ENCODE measurements at regions of chr1 and their contacts with region 1.

Region 1: GRCh38 chr1:39196244-39197215 is 8.0 kb upstream of the MACF1 start:
- DNase-seq: peak; percentile 76
- H3K4me3 ChIP-seq: no peak overlapping the region
- H3K27ac ChIP-seq: peak overlapping the region; percentile 69
- H3K4me1 ChIP-seq: peaks cover 53% of the 10 kb centered on the region
- H3K27me3 ChIP-seq: no peaks in the 10 kb centered on the region
- CTCF ChIP-seq: no peak

Region 2: DNA sequence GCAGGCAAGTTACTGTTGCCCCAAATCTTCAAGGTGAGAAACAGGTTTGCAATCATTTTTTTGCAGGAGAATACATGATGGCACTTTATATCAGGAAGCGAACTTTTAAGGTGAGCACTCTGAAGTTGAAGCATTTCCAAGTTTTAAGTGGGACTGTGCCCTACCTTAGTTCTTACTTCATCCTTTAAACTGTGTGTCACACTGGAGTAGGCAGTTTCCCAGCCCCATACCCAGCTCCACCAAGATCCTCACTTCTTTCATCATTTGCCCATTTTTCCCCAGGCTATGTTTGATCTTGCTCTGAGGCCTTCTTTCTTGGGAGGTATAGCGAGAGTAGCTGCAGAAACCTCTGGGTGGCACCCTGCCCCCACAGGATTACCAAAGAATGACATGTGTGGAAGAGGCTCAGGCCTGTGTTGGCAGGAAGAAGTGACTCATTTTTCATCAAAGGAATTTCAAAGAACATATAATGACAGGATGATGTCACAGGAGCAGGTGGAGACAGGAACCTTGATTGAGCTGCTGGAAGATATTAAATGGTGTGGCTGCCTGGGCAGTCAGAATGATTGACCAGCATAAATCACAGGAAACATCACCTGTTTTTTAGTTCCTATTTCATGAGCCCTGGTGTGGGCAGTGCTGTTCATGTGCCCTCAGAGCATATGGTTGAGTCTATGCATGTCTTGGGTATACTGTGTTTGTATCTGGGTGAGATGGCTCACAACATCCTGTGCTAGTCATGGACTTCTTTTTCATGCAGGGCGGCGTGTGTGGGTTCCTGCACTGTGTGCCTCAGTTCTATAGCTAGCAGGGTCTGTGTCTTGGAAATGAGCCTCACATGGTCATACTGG is 12.8 kb before region 1 on chr1:
- CTCF ChIA-PET with region 1: no interaction called
- dilution Hi-C with region 1: no loop called
- in situ Hi-C with region 1: no loop called
- intact Hi-C with region 1: loop called (anchors 1 kb)
- DNase-seq: peak; percentile 100
- H3K4me3 ChIP-seq: no peak overlapping the region
- H3K27ac ChIP-seq: peak overlapping the region; percentile 93
- H3K4me1 ChIP-seq: peaks cover 59% of the 10 kb centered on the region
- H3K27me3 ChIP-seq: no peaks in the 10 kb centered on the region
- CTCF ChIP-seq: peak; percentile 40 to 52

Region 3: DNA sequence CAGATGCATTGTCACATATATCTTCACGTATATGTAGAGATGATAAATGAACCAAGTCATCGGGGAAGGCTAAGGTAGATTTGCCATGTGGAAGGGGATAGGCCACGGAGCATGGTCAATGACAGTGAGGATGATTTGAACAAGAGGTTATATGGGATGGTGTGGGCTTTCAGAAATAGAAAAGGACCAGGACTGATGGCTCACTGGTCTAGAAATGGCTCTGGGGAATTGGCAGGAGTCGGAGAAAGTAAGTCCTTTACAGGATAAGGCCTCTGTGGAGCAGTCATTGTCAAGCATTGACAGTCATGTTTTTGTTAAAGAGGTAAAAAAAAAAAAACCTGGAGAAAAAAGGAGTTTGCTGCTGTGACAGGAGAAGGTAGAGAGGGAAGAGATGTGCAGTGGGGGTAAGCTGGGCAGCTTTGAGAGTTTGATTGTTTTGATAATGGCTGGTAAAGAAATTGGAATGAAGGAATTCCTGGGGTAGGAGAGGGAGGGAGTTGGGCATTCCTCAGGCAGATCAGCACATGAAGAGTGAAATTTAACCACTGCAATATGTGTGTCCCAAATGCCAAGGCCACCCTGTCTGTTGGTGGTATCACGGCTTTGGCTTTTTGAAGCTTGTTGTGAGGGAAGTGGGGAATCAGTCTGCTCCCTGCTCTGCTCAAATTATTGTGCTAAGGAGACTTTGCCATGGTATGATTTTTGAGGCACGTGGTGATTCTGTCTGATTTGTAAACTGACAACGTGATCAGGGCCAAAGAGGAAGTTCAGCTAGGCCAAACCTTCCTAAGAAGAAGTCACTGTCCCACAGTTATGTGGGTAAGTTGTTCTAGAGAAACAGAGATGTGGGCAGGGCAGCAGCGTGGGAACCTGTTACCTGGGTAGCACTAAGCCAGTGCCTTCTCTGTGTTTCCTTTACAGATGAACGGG is 34.0 kb after region 1 on chr1:
- CTCF ChIA-PET with region 1: interaction called, 14 read pairs
- dilution Hi-C with region 1: no loop called
- in situ Hi-C with region 1: no loop called
- intact Hi-C with region 1: no loop called
- DNase-seq: no peak
- H3K4me3 ChIP-seq: no peak overlapping the region
- H3K27ac ChIP-seq: peak overlapping the region; percentile 62
- H3K4me1 ChIP-seq: peaks cover 25% of the 10 kb centered on the region
- H3K27me3 ChIP-seq: no peaks in the 10 kb centered on the region
- CTCF ChIP-seq: no peak

Region 4: DNA sequence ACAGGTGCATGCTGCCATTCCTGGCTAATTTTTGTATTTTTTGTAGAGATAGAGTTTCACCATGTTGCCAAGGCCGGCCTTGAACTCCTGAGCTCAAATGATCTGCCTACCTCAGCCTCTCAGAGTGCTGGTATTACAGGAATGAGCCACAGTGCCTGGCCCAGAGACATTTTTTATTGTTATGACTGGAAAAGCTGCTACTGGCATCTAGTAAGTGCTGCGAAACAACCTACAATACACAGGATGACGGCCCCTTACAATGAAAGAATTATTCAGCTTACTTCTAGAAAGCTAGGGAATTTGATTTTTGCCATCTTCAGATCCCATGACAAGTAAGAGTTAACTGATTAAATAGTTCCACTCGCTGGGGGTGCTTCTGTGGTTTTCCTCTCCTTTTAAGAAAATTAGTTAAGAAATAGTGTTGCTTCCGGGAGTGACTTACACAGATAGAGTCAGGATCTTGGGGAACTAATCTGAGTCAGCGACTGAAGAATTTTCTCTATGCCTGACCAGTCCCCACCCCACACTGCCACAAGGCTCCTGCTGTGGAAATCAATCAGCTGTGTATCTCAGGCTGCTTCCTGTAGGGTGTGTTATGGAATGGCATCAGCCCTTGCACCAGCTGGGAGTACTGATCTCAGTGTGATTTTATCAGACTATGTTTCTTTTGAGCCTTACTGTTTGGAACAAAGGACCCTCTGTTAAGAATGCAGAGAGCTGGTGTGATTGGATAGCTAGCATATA is 201.9 kb after region 1 on chr1:
- CTCF ChIA-PET with region 1: no interaction called
- dilution Hi-C with region 1: no loop called
- in situ Hi-C with region 1: no loop called
- intact Hi-C with region 1: loop called (anchors 10 kb)
- DNase-seq: peak; percentile 96
- H3K4me3 ChIP-seq: peak overlapping the region in 1 of 3 experiments; percentile 30
- H3K27ac ChIP-seq: peak overlapping the region; percentile 99
- H3K4me1 ChIP-seq: peaks cover 59% of the 10 kb centered on the region
- H3K27me3 ChIP-seq: no peaks in the 10 kb centered on the region
- CTCF ChIP-seq: no peak

Region 5: GRCh38 chr1:39653546-39654031 is 457.1 kb after region 1 on chr1:
- CTCF ChIA-PET with region 1: no interaction called
- dilution Hi-C with region 1: no loop called
- in situ Hi-C with region 1: no loop called
- intact Hi-C with region 1: loop called (anchors 10 kb)
- DNase-seq: peak; percentile 81
- H3K4me3 ChIP-seq: no peak overlapping the region
- H3K27ac ChIP-seq: no peak overlapping the region
- H3K4me1 ChIP-seq: no peaks in the 10 kb centered on the region
- H3K27me3 ChIP-seq: no peaks in the 10 kb centered on the region
- CTCF ChIP-seq: peak; percentile 80 to 92

Measured in mammary epithelial cell (primary cell).